Naive thymus-derived CD4-positive, alpha-beta T cell (primary cell): ENCODE measurements at regions of chr18 and their contacts with region 1.

Region 1: GRCh38 chr18:39799006-39799405 is 2156.0 kb upstream of the PIK3C3 start:
- DNase-seq: no peak
- ATAC-seq: no peak
- H3K4me3 ChIP-seq: no peak overlapping the region
- H3K4me3 Mint-ChIP-seq: peak overlapping the region in 7 of 10 donors; percentile 25 to 80 (median 70)
- H3K27ac ChIP-seq: no peak overlapping the region
- H3K27ac Mint-ChIP-seq: peak overlapping the region in 2 of 9 donors; percentile 56 to 69
- H3K4me1 ChIP-seq: no peaks in the 10 kb centered on the region
- H3K4me1 Mint-ChIP-seq: peaks cover 0 to 8% (median 0%) of the 10 kb centered on the region in 7 donors
- H3K27me3 ChIP-seq: no peaks in the 10 kb centered on the region
- H3K27me3 Mint-ChIP-seq: peaks cover 0 to 11% (median 7%) of the 10 kb centered on the region in 5 donors

Region 2: GRCh38 chr18:39732918-39733317 is 66.1 kb before region 1 on chr18:
- CTCF ChIA-PET with region 1: no interaction called
- POLR2A ChIA-PET with region 1: no interaction called
- intact Hi-C with region 1: loop called in 1 of 2 experiments (anchors 10 kb)
- DNase-seq: no peak
- ATAC-seq: no peak
- H3K4me3 ChIP-seq: no peak overlapping the region
- H3K4me3 Mint-ChIP-seq: no peak overlapping the region
- H3K27ac ChIP-seq: no peak overlapping the region
- H3K27ac Mint-ChIP-seq: no peak overlapping the region
- H3K4me1 ChIP-seq: no peaks in the 10 kb centered on the region
- H3K4me1 Mint-ChIP-seq: no peaks in the 10 kb centered on the region
- H3K27me3 ChIP-seq: no peaks in the 10 kb centered on the region
- H3K27me3 Mint-ChIP-seq: no peaks in the 10 kb centered on the region